MCF 10A (cell line): ENCODE measurements at regions of chr7 and their contacts with region 1.

Region 1: GRCh38 chr7:39894904-39895303 is 55.2 kb upstream of the CDK13 start:
- DNase-seq: no peak
- H3K4me3 Mint-ChIP-seq: no peak overlapping the region
- H3K27ac Mint-ChIP-seq: no peak overlapping the region
- H3K4me1 Mint-ChIP-seq: no peaks in the 10 kb centered on the region
- H3K27me3 Mint-ChIP-seq: peaks cover 11% of the 10 kb centered on the region
- CTCF ChIP-seq: no peak

Region 2: DNA sequence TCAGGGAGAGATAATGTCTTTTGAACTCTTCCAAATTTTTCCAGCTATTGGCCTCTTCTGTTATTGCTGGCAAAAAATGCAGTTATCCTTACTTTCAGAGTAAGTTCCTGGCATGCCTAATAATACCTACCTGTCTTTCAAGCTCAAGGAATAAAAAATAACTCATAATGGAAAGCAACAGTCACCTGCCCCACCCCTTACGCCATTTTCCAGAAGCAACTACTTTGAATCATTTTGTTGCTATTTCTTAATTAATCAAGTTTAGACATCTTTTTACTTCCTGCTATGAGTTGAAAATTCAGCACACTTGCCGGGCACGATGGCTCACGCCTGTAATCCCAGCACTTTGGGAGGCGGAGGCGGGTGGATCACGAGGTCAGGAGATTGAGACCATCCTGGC is 32.1 kb after region 1 on chr7:
- CTCF ChIA-PET with region 1: interaction called, 10 read pairs
- POLR2A ChIA-PET with region 1: no interaction called
- intact Hi-C with region 1: no loop called
- DNase-seq: no peak
- H3K4me3 Mint-ChIP-seq: no peak overlapping the region
- H3K27ac Mint-ChIP-seq: no peak overlapping the region
- H3K4me1 Mint-ChIP-seq: no peaks in the 10 kb centered on the region
- H3K27me3 Mint-ChIP-seq: no peaks in the 10 kb centered on the region
- CTCF ChIP-seq: no peak

Region 3: GRCh38 chr7:39948956-39949928 is 54.3 kb after region 1 on chr7:
- CTCF ChIA-PET with region 1: interaction called, 17 read pairs
- POLR2A ChIA-PET with region 1: interaction called, 32 read pairs
- intact Hi-C with region 1: loop called (anchors 1 kb)
- DNase-seq: peak; percentile 99
- H3K4me3 Mint-ChIP-seq: peak overlapping the region; percentile 96
- H3K27ac Mint-ChIP-seq: peak overlapping the region; percentile 96
- H3K4me1 Mint-ChIP-seq: no peaks in the 10 kb centered on the region
- H3K27me3 Mint-ChIP-seq: no peaks in the 10 kb centered on the region
- CTCF ChIP-seq: no peak

Region 4: DNA sequence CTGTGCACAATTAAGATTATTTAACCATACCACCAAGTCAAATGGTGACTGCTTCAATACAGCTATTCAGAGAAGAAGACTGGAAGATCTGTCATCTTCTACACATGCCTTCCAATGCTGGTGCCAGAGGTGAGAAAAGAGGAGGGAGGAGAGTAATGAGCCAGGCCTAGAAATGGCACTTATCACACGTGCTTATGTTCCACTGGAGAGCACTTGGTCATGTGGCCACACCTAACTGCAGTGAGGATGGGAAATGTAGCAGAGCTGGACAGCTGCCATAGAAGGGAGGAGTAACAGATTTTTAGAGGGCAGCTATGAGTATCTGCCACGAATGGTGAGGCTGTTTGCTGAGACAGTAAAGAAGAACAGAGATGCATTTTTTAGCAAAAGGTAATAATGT is 162.4 kb after region 1 on chr7:
- CTCF ChIA-PET with region 1: interaction called, 152 read pairs
- POLR2A ChIA-PET with region 1: interaction called, 8 read pairs
- intact Hi-C with region 1: loop called (anchors 1 kb)
- DNase-seq: peak; percentile 51
- H3K4me3 Mint-ChIP-seq: no peak overlapping the region
- H3K27ac Mint-ChIP-seq: peak overlapping the region; percentile 1
- H3K4me1 Mint-ChIP-seq: peaks cover 17% of the 10 kb centered on the region
- H3K27me3 Mint-ChIP-seq: no peaks in the 10 kb centered on the region
- CTCF ChIP-seq: no peak